GM10248 (cell line): ENCODE measurements at regions of chr5 and their contacts with region 1.

Region 1: GRCh38 chr5:132007399-132008165 is 3.9 kb downstream of the ACSL6 start:
- DNase-seq: peak; percentile 75
- CTCF ChIP-seq: peak; percentile 62

Region 2: GRCh38 chr5:131423056-131423455 is 584.5 kb before region 1 on chr5:
- CTCF ChIA-PET with region 1: interaction called, 55 read pairs
- POLR2A ChIA-PET with region 1: no interaction called
- DNase-seq: no peak
- CTCF ChIP-seq: peak; percentile 42

Region 3: GRCh38 chr5:131796793-131797693 is 210.5 kb before region 1 on chr5 and contains the start of gene FNIP1:
- CTCF ChIA-PET with region 1: interaction called, 22 read pairs
- POLR2A ChIA-PET with region 1: interaction called, 8 read pairs
- DNase-seq: peak; percentile 99
- CTCF ChIP-seq: no peak

Region 4: DNA sequence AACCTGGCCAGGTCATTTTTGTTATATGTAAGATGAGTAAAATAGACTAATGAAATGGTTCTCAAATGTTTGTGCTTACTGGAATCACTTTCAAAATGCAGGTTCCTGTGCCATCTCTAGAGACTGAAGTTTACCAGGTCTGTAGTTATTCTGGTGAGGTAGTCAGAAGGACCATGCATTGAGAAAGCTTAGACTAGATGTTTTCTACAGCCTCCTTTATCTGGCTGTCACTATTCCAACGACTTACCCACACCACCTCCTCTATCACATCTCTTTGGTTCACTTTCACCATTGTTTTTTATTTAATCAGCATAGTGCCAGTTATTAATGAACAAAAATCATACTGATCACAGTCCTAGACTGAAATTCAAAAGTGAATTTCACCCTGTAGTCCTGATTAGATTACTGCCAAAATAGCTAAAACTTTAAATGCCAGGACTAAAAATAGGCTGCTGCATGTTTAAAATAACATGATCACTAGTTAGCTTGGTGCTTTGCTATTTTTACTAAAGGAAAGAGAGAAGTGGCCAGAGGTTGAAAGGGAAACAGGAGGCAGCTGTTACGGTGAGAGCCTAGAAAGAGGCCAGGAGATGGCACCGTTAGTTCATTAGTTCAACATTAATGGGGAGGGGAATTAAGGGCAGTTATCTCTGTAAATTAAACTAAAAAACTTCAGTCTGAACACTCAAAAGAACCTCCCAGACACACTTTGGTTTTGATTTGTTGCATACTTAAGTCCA is 196.9 kb before region 1 on chr5:
- CTCF ChIA-PET with region 1: interaction called, 70 read pairs
- POLR2A ChIA-PET with region 1: no interaction called
- DNase-seq: peak; percentile 52
- CTCF ChIP-seq: peak; percentile 58

Region 5: DNA sequence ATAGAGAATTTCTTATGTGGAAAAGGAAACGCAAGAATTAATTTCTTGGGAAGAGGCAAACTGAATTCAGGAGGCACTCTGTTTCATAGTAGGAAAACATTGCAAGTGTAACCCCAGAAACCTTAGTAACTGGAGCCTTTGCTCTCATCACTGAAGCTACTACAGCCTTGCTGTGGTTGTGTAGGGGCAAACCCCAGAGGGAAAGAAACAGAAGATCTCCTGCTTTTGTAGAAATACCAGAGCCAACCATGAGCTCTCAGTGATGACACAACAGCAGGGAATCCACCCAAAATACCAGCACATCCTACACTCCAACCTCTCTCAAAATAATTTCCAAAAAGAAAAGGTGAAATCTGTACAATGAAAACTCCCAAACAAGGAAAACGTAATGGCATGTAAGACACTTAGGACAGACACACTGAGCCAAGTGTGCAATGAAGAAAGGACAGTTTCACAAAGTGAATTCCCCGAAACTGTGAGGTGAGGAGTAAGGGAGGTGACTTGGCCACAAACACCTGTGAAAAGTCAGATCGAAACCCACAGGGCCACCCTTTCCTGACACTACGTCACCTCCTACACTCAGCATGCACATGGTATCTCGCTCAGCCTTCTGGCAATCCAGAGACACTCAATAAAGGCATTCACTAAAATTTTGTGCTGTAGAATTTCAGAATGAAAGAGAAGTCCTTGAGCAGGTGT is 12.4 kb after region 1 on chr5:
- CTCF ChIA-PET with region 1: interaction called, 15 read pairs
- POLR2A ChIA-PET with region 1: no interaction called
- DNase-seq: peak; percentile 78
- CTCF ChIP-seq: no peak